ENCODE measurements at regions of chr12 and their contacts with region 1.

Region 1: GRCh38 chr12:68866950-68867349 is 59.0 kb downstream of the MDM2 start:
- DNase-seq: no peak

Region 2: GRCh38 chr12:68140556-68140955 is 726.4 kb before region 1 on chr12:
- intact Hi-C with region 1: no loop called
- DNase-seq: no peak

Region 3: DNA sequence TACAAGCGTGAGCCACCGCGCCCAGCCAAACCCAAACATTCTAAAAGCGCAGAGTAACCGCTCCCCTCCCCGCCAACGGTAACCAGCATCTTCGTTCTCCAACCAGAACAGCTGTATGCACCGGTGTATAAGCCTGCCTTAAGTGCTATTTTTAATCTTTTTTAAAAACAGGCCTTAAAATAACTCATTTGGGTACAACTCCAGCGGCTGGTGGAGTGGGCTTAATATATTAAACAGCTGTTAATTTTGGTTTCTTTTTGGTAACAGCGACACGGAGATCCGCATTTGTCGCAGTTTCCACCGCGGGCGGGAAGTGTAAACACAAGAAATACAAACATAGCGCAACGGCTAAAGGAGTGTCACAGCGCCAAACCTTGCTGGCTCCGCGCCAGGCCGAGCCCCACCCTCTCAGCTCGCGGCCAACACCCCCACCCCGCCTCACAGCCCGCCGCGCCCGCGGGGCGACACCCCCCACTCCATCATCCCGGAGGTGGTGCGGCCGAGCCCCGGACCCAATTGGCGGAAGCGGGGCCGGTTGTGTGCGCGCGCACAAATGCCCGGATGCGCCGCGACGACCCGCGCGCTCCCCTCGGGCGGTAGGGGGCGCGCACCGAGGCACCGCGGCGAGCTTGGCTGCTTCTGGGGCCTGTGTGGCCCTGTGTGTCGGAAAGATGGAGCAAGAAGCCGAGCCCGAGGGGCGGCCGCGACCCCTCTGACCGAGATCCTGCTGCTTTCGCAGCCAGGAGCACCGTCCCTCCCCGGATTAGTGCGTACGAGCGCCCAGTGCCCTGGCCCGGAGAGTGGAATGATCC is 59.2 kb before region 1 on chr12 and contains the start of gene MDM2:
- intact Hi-C with region 1: no loop called
- DNase-seq: peak; percentile 69 to 95 (median 91)

Region 4: GRCh38 chr12:69068431-69068830 is 201.5 kb after region 1 on chr12:
- intact Hi-C with region 1: loop called (anchors 5 kb)
- DNase-seq: no peak